ENCODE measurements at regions of chr4 and their contacts with region 1.

Region 1: GRCh38 chr4:56475917-56476316 is 8.5 kb downstream of the SRP72 start:
- DNase-seq: no peak
- ATAC-seq: no peak
- H3K4me3 Mint-ChIP-seq: no peak overlapping the region
- H3K27ac Mint-ChIP-seq: no peak overlapping the region
- H3K4me1 Mint-ChIP-seq: peaks cover 7% of the 10 kb centered on the region
- H3K27me3 Mint-ChIP-seq: no peaks in the 10 kb centered on the region
- CTCF ChIP-seq: no peak

Region 2: DNA sequence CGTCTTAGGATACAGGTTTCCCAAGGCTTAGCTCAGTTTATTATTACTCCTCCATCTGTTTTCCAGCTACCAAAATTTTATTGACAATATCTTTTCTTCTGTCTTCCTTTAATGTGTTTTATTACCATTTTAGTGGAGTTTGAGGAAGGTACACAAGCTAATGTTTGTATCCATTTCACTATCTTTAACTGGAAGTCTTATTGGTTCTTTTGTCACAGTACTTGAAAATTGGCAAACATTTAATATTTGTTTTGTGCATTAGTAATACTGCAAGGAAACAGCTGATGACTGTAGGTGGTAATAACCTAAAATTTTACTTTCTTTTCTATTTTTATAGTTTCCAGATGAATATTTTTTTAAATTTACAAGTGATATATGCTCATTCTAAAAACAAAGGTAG is 20.3 kb after region 1 on chr4:
- CTCF ChIA-PET with region 1: no interaction called
- POLR2A ChIA-PET with region 1: no interaction called
- intact Hi-C with region 1: loop called (anchors 2 kb)
- DNase-seq: no peak
- ATAC-seq: no peak
- H3K4me3 Mint-ChIP-seq: no peak overlapping the region
- H3K27ac Mint-ChIP-seq: no peak overlapping the region
- H3K4me1 Mint-ChIP-seq: no peaks in the 10 kb centered on the region
- H3K27me3 Mint-ChIP-seq: no peaks in the 10 kb centered on the region
- CTCF ChIP-seq: no peak